ENCODE measurements at regions of chr7 and their contacts with region 1.

Region 1: GRCh38 chr7:77657427-77658224 is 38.6 kb upstream of the RSBN1L start:
- DNase-seq: peak; percentile 58
- CTCF ChIP-seq: peak; percentile 27

Region 2: GRCh38 chr7:77759294-77759889 is 101.8 kb after region 1 on chr7:
- in situ Hi-C with region 1: loop called (anchors 5 kb)
- DNase-seq: peak; percentile 43
- CTCF ChIP-seq: peak; percentile 77

Region 3: GRCh38 chr7:77940647-77941046 is 283.0 kb after region 1 on chr7:
- in situ Hi-C with region 1: loop called (anchors 25 kb)
- DNase-seq: peak; percentile 47
- CTCF ChIP-seq: peak; percentile 38

Region 4: GRCh38 chr7:78039790-78040776 is 382.5 kb after region 1 on chr7:
- in situ Hi-C with region 1: loop called (anchors 25 kb)
- DNase-seq: peak; percentile 79
- CTCF ChIP-seq: peak; percentile 89

Region 5: GRCh38 chr7:78714356-78714755 is 1056.7 kb after region 1 on chr7:
- in situ Hi-C with region 1: no loop called
- DNase-seq: no peak
- CTCF ChIP-seq: no peak